Naive thymus-derived CD4-positive, alpha-beta T cell (primary cell): ENCODE measurements at regions of chr16 and their contacts with region 1.

Region 1: GRCh38 chr16:14151256-14152030 is 80.3 kb downstream of the MRTFB start:
- DNase-seq: no peak
- ATAC-seq: no peak
- H3K4me3 ChIP-seq: no peak overlapping the region
- H3K4me3 Mint-ChIP-seq: no peak overlapping the region
- H3K27ac ChIP-seq: no peak overlapping the region
- H3K27ac Mint-ChIP-seq: no peak overlapping the region
- H3K4me1 ChIP-seq: no peaks in the 10 kb centered on the region
- H3K4me1 Mint-ChIP-seq: no peaks in the 10 kb centered on the region
- H3K27me3 ChIP-seq: no peaks in the 10 kb centered on the region
- H3K27me3 Mint-ChIP-seq: no peaks in the 10 kb centered on the region

Region 2: DNA sequence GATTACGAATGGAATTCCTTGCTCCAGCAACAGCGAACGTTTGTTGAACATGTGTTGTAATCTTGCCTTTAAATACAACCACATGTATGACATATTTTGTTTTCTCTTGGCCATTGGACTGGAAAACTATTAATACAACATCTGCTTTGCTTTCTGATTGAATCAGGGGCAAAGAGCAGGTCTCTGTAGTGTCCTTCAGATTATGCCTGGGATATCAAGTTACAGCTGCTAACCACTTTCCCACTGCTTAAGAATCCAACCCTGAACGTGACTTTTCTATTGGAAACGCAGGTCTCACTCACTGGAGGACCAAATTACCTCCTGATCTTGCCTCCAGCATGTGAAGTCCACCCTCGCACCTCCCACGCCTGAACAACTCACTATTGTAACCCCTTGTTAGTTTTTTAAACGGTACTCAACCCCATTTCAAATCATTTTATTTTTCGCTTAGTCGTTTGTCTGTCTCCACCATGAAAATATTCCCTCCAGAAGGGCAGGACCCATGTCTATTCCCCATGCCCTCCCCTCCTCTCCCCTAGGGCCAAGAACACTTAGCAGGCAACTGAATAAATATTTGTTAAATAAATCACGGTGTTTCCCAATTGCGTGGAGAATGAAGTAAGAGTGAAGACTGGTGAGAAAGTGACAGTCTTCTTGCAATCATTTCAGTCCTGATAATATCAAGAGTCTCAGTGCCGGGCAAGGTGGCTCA is 137.7 kb before region 1 on chr16:
- CTCF ChIA-PET with region 1: no interaction called
- POLR2A ChIA-PET with region 1: no interaction called
- intact Hi-C with region 1: no loop called
- DNase-seq: no peak
- ATAC-seq: no peak
- H3K4me3 ChIP-seq: no peak overlapping the region
- H3K4me3 Mint-ChIP-seq: no peak overlapping the region
- H3K27ac ChIP-seq: no peak overlapping the region
- H3K27ac Mint-ChIP-seq: no peak overlapping the region
- H3K4me1 ChIP-seq: no peaks in the 10 kb centered on the region
- H3K4me1 Mint-ChIP-seq: no peaks in the 10 kb centered on the region
- H3K27me3 ChIP-seq: no peaks in the 10 kb centered on the region
- H3K27me3 Mint-ChIP-seq: peaks cover 7 to 29% (median 12%) of the 10 kb centered on the region in 5 donors

Region 3: GRCh38 chr16:14036561-14037288 is 114.7 kb before region 1 on chr16:
- CTCF ChIA-PET with region 1: no interaction called
- POLR2A ChIA-PET with region 1: no interaction called
- intact Hi-C with region 1: loop called in 1 of 2 experiments (anchors 5 kb)
- DNase-seq: no peak
- ATAC-seq: no peak
- H3K4me3 ChIP-seq: no peak overlapping the region
- H3K4me3 Mint-ChIP-seq: no peak overlapping the region
- H3K27ac ChIP-seq: no peak overlapping the region
- H3K27ac Mint-ChIP-seq: no peak overlapping the region
- H3K4me1 ChIP-seq: no peaks in the 10 kb centered on the region
- H3K4me1 Mint-ChIP-seq: peaks cover 0 to 6% (median 5%) of the 10 kb centered on the region in 7 donors
- H3K27me3 ChIP-seq: no peaks in the 10 kb centered on the region
- H3K27me3 Mint-ChIP-seq: no peaks in the 10 kb centered on the region

Region 4: DNA sequence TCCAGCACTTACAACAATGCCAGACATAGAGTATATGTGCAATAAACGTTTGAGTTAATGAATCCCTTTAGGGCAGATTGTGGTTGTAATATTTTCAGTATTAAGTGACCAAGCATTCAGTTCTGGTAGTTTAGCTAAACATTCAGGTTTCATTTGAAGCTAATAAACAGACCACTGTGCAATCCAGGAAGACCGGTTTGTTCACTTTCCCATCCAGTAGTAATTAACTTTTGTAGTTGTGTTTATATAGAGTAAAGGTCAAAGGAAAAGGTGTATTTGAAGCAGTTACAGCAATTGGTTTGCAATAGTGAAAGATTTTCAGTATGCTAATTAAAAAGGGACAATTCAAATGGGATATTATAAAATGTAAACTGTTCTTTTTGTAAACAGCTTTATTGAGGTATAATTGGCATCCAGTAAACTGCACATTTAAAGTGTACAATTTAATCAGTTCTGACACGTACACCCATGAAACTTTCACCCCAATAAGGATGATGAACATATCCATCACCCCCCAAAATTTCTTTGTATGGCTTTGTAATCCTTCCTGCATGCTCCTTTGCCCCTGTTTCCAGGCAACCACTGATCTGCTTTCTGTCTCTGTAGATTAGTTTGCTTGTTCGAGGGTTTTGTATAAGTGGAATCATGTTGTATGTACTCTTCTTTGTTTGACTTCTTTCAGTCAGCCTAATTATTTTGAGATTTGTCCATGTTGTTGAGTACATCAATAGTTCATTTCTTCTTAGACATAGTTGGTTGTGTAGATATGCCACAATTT is 54.1 kb before region 1 on chr16:
- CTCF ChIA-PET with region 1: no interaction called
- POLR2A ChIA-PET with region 1: no interaction called
- intact Hi-C with region 1: no loop called
- DNase-seq: no peak
- ATAC-seq: no peak
- H3K4me3 ChIP-seq: no peak overlapping the region
- H3K4me3 Mint-ChIP-seq: no peak overlapping the region
- H3K27ac ChIP-seq: no peak overlapping the region
- H3K27ac Mint-ChIP-seq: no peak overlapping the region
- H3K4me1 ChIP-seq: no peaks in the 10 kb centered on the region
- H3K4me1 Mint-ChIP-seq: peaks cover 9 to 81% (median 38%) of the 10 kb centered on the region in 7 donors
- H3K27me3 ChIP-seq: no peaks in the 10 kb centered on the region
- H3K27me3 Mint-ChIP-seq: no peaks in the 10 kb centered on the region

Region 5: DNA sequence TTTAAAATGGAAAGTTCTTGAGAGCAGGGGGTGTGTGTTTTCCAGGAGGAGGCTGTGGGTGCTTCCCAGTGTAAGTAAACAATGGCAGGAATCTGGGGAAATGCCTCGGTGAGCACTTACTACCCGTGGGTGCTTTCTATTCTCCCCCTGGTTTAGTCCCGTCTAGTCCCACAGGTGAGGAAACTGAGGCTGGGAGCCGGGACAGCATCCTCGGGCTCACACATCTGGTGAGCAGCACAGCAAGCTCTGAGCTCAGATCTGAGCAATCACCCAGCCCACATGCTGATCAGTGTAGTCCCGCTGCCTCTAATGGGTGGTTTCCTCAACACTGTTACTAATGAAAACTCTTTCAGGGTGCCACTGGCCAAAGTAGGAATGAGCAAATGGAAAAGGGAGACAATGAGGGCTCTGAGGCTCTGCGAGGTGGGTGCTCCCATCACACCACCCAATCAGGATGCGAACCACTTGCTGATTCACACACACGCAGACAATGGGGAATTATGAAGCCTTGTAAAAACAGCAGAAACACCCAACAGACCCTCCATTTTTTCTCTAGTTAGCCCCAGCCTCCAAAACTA is 276.0 kb after region 1 on chr16:
- CTCF ChIA-PET with region 1: no interaction called
- POLR2A ChIA-PET with region 1: no interaction called
- intact Hi-C with region 1: no loop called
- DNase-seq: no peak
- ATAC-seq: no peak
- H3K4me3 ChIP-seq: no peak overlapping the region
- H3K4me3 Mint-ChIP-seq: no peak overlapping the region
- H3K27ac ChIP-seq: no peak overlapping the region
- H3K27ac Mint-ChIP-seq: peak overlapping the region in 1 of 9 donors; percentile 57
- H3K4me1 ChIP-seq: no peaks in the 10 kb centered on the region
- H3K4me1 Mint-ChIP-seq: peaks cover 0 to 1% (median 0%) of the 10 kb centered on the region in 7 donors
- H3K27me3 ChIP-seq: no peaks in the 10 kb centered on the region
- H3K27me3 Mint-ChIP-seq: no peaks in the 10 kb centered on the region